Heart left ventricle (tissue), 16 donors: ENCODE measurements at regions of chr1 and their contacts with region 1.

Region 1: GRCh38 chr1:19010995-19011844 is 54.7 kb upstream of the IFFO2 start:
- DNase-seq: peak in 1 of 5 donors; percentile 66
- ATAC-seq: peak in 3 of 4 donors; percentile 18 to 85 (median 80)
- H3K4me3 ChIP-seq: no peak overlapping the region
- H3K27ac ChIP-seq: peak overlapping the region in 2 of 12 donors; percentile 46 to 70
- H3K4me1 ChIP-seq: peaks cover 0 to 24% (median 0%) of the 10 kb centered on the region in 12 donors
- H3K27me3 ChIP-seq: peaks cover 0 to 7% (median 0%) of the 10 kb centered on the region in 9 donors
- CTCF ChIP-seq: no peak
- POLR2A ChIP-seq: no peak

Region 2: DNA sequence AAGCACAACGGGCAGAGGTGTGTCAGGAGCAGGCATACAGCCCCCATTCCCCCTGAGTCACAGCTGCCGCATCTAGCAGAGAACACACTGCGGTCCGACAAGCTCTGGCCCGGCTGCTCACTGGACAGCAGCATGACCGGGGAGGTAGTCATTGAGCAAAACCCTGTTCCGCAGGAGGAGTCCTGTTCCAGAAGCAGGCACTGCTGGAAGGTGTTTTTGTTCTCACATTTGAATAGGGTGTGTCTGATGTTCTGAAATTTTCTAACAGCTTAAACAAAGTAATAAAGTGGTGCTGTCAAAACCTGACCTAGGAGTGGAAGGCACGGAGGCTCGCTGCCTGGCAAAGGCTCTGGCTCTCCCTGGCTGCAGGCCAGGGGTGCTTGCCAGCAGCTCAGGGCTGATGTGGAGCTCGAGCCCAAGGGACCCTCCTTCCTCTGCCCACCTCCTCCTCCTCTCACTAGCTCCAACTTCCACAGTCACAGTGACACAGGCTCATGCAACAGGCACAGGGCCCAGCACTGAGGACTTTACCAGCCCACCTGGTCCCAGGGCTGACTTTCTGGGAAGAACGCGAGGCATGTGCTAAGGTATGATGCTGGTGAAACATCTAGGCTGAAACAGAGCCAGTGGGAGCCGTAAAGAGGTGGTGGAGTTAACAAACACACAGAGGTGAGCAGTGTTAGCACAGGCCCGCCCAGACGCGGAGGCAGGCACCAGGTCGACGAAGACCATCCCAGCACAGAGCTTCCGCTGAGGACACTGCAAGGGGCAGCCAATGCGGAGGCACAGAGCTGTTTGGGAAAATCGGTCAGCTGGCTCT is 63.9 kb after region 1 on chr1:
- intact Hi-C with region 1: loop called in 1 of 10 experiments (anchors 10 kb)
- DNase-seq: peak in 1 of 5 donors; percentile 61
- ATAC-seq: peak in 3 of 4 donors; percentile 49 to 63 (median 51)
- H3K4me3 ChIP-seq: no peak overlapping the region
- H3K27ac ChIP-seq: peak overlapping the region in 2 of 12 donors; percentile 13 to 43
- H3K4me1 ChIP-seq: peaks cover 0 to 33% (median 14%) of the 10 kb centered on the region in 12 donors
- H3K27me3 ChIP-seq: no peaks in the 10 kb centered on the region
- CTCF ChIP-seq: no peak
- POLR2A ChIP-seq: no peak

Region 3: DNA sequence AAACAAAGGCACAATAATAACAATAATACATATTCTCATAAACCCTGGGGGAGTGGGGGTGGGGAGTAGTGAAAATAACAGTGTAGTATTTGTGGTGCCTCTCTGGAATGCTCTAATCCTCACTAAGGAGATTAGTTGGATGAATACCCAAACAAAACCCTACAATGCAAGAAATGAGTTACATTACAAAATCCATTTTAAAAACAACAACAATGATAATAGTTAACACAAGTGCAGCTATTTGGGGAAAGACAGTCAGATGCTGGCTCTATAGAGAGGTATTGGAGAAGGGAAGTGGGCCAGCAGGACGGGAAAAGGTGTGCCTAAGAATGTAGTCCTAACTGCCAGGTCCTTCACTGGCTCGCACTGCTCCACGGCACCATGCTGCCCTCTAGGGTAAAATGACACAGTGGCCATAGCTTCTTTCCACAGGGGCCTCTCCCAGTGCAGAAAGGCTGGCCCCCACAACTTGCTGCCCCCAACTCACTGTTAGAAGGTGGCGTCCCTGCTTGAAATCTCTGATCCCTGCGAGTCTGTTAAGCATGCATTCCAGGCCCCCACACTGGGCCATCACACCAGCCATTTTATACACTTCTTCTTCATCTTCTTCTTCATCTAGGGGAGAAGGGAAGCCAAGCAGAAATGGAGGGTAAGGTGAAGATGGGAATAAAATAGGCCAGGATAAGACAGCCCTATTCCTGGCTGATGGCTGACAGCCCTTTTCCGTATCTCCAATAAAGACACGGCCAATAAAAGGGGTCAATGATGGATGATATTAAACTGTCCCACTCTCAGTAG is 85.0 kb after region 1 on chr1:
- intact Hi-C with region 1: loop called in 1 of 10 experiments (anchors 5 kb)
- DNase-seq: peak in 2 of 5 donors; percentile 47 to 49
- ATAC-seq: peak; percentile 64 to 85 (median 79)
- H3K4me3 ChIP-seq: no peak overlapping the region
- H3K27ac ChIP-seq: peak overlapping the region in 1 of 12 donors; percentile 20
- H3K4me1 ChIP-seq: peaks cover 0 to 14% (median 0%) of the 10 kb centered on the region in 12 donors
- H3K27me3 ChIP-seq: no peaks in the 10 kb centered on the region
- CTCF ChIP-seq: peak; percentile 35 to 70 (median 58)
- POLR2A ChIP-seq: no peak